HepG2 (cell line): ENCODE measurements at regions of chr15 and their contacts with region 1.

Region 1: GRCh38 chr15:93997084-93997918 is 234.1 kb upstream of the MCTP2 start:
- DNase-seq: peak; percentile 8
- ATAC-seq: peak; percentile 55; the same call in 2 of the 3 replicates
- H3K4me3 ChIP-seq: no peak overlapping the region
- H3K27ac ChIP-seq: no peak overlapping the region
- H3K4me1 ChIP-seq: no peaks in the 10 kb centered on the region
- H3K27me3 ChIP-seq: peaks cover 0 to 3% of the 10 kb centered on the region in 2 experiments; a peak in 1 of 5 replicates
- CTCF ChIP-seq: peak; percentile 49
- EP300 ChIP-seq: no peak
- POLR2A ChIP-seq: no peak
- RAD21 ChIP-seq: no peak

Region 2: DNA sequence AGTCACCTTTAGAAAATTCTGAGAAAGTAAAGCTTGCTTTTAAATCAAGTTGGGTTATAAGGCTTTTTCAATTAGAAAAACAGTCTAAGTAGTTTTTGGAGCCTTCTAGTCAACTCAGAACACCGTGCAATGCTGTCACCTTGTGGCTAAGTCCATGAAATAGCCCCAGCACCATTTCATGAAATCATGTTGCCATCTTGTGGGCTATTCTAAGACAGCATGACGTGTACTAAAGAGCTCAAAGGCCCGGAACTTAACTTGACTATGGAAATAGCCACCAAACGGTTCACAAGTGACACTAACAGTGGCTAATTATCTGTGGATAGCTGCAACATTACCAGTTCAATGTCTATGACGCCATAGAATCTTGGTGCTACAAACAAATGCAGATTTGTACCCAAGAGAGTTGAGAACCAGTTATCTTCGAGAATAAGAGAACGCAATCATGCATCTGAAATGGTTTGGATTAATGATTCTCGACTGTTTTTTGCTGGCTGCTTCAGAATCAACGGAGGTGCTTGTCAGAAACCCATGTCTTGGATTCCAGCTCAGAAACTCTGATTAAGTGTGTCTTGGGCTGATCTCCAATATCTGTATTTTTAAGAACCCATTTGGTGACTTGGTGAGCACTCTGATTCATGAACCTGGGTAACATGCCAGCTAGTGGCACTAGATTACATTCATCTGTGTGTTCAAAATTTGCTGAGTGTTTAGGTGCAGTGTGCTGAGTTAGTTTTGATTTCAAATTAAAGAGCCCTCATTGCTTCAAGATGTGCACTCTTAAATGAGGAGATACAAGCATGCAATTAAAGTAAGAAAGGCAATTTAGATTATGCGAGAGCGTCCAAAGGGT is 122.8 kb after region 1 on chr15:
- CTCF ChIA-PET with region 1: interaction called, 28 read pairs
- POLR2A ChIA-PET with region 1: no interaction called
- in situ Hi-C with region 1: loop called (anchors 5 kb)
- intact Hi-C with region 1: loop called (anchors 1 kb)
- DNase-seq: peak; percentile 71
- ATAC-seq: peak; percentile 99
- H3K4me3 ChIP-seq: no peak overlapping the region
- H3K27ac ChIP-seq: no peak overlapping the region
- H3K4me1 ChIP-seq: no peaks in the 10 kb centered on the region
- H3K27me3 ChIP-seq: no peaks in the 10 kb centered on the region
- CTCF ChIP-seq: peak; percentile 92
- EP300 ChIP-seq: no peak
- POLR2A ChIP-seq: no peak
- RAD21 ChIP-seq: peak; percentile 76

Region 3: DNA sequence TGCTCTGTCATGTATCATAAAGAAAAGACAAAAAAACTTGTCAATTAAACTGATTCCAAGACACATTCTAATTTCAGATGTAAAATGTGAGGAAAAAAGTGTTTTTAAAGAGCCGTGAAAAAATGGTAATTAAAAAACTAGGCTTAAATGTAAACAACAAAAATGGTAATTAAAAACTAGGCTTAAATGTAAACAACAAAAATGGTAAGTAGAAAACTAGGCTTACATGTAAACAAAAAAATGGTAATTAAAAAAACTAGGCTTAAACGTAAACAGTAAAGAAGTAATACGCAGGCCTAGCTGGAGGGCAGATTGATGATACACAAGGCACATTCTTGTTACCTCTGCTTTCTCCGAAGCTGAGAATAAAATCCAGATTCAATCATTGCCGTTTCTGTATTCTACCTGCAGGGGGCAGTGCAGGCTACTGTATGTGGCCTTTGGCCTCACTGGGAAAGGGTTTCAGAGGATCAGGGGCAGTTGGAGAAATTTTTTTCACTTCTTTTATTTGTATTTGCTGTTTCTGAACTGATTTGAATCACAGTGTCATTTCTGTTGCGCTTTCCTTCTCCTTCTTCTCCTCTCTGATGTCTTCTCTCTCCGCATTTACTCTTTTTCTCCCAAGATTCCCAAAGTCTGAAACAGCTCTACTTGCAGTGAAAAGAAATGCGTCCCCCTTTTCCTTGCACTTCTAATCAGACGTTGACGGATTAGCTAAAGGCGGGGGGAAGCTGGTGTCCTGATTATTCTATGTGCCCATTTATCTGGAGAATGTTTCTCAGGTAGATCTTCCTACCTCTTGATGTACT is 166.9 kb after region 1 on chr15:
- CTCF ChIA-PET with region 1: no interaction called
- POLR2A ChIA-PET with region 1: no interaction called
- in situ Hi-C with region 1: no loop called
- intact Hi-C with region 1: no loop called
- DNase-seq: peak; percentile 53
- ATAC-seq: peak; percentile 76
- H3K4me3 ChIP-seq: no peak overlapping the region
- H3K27ac ChIP-seq: no peak overlapping the region
- H3K4me1 ChIP-seq: no peaks in the 10 kb centered on the region
- H3K27me3 ChIP-seq: no peaks in the 10 kb centered on the region
- CTCF ChIP-seq: peak; percentile 82
- EP300 ChIP-seq: no peak
- POLR2A ChIP-seq: no peak
- RAD21 ChIP-seq: peak; percentile 61